Activated CD4-positive, alpha-beta T cell treated with anti-CD3 and anti-CD28 coated beads for 36 hours (primary cell): ENCODE measurements at regions of chr17 and their contacts with region 1.

Region 1: DNA sequence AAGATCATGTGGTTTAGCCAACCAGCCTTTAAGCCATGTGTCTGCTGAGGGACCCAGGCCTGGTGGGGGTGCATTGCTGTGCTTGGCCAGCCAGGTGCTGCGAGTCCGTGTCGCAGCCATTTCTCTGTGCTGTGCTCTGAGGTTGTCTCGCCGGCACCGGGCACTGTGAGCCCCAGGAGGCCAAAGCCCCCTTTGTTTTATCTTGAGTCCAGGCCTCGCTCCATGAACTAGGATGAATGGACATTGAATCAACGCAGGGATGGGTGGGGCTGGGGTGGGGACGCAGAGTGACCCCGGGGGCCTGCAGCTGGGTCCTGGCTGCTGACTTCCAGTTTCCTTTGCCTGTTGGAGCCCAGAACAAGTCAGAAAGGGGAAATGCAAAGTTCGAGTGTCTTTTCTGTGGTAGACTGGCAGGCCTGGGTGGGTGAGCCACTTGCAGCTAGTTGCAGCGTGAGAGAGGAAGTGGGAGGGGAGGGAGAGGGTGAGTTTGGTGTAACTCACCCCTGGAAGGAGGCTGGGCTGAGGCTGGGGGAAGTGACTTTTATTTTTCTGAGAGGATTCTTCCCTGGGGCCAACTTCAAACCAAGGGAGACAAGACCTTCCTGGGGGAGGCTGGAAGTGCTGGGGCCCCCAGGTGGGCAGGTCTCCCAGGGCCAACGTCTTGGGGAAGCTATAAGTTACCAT is 324.7 kb downstream of the SEC14L1 start:
- DNase-seq: peak; percentile 90
- ATAC-seq: peak; percentile 83
- H3K4me3 Mint-ChIP-seq: peak overlapping the region; percentile 62
- H3K27ac Mint-ChIP-seq: peak overlapping the region; percentile 98
- H3K4me1 Mint-ChIP-seq: peaks cover 90% of the 10 kb centered on the region
- H3K27me3 Mint-ChIP-seq: no peaks in the 10 kb centered on the region

Region 2: GRCh38 chr17:77494664-77495435 is 29.4 kb after region 1 on chr17:
- CTCF ChIA-PET with region 1: interaction called, 5 read pairs
- POLR2A ChIA-PET with region 1: interaction called, 4 read pairs
- intact Hi-C with region 1: loop called in 1 of 2 experiments (anchors 2 kb)
- DNase-seq: peak; percentile 84
- ATAC-seq: peak; percentile 58
- H3K4me3 Mint-ChIP-seq: no peak overlapping the region
- H3K27ac Mint-ChIP-seq: peak overlapping the region; percentile 63
- H3K4me1 Mint-ChIP-seq: peaks cover 4% of the 10 kb centered on the region
- H3K27me3 Mint-ChIP-seq: no peaks in the 10 kb centered on the region

Region 3: GRCh38 chr17:78128551-78129350 is 663.3 kb after region 1 on chr17 and contains the start of gene TMC6:
- CTCF ChIA-PET with region 1: no interaction called
- POLR2A ChIA-PET with region 1: no interaction called
- intact Hi-C with region 1: loop called in 1 of 2 experiments (anchors 5 kb)
- DNase-seq: peak; percentile 87
- ATAC-seq: peak; percentile 31
- H3K4me3 Mint-ChIP-seq: peak within 1 kb of the TSS; percentile 94
- H3K27ac Mint-ChIP-seq: peak within 1 kb of the TSS; percentile 96
- H3K4me1 Mint-ChIP-seq: peaks cover 52% of the 10 kb centered on the region
- H3K27me3 Mint-ChIP-seq: no peaks in the 10 kb centered on the region
- total RNA-seq, gene TMC6: 138 to 145 TPM